ENCODE measurements at regions of chr5 and their contacts with region 1.

Region 1: DNA sequence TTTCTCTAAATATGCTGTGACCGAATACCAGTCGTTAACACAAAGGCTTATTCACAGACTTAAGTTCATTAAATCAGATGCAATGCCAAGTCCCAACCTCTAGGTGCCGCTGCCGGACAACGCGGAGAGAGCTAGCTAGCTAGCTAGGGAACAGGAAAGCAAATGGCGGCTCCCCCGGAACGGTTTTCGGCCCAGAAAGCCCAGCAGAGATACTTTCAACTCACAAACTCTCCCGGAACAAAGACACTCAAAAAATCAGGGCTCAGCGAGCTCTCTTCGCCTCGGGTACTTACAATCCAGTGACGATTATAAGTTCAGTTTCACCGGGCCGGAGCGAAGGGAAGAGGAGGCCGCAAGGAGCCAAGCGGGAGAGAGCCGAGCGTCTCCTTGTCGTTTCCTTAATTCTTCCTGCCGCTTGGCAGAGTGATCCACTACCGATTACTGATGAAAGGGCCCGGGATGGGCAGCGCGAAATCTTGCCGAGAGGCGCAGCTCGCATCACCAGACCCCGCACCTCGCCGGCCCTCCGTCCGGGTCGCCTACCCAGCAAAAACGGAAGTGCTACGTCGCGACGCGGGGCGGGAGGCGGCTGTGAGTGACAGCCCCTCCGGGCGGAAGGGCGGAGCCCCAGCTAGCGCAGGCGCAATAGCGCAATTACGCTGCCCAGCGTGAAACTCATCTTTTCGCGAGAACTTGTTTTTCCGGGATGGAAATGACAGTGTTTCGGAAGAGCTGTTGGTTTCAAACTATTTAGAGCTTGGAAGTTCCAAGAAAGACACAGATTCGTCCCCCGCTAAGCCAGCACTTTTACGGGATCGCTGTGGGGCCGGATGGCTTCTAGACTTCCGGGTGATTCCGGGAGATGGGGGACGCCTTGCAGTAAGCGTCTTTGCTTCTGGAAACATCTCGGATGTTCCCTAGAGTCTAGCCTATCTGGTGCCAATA is at the start of gene TAF7:
- DNase-seq: peak; percentile 96 to 98 (median 97)
- H3K4me3 ChIP-seq: peak within 1 kb of the TSS; percentile 62 to 97 (median 87)
- H3K27ac ChIP-seq: peak within 1 kb of the TSS; percentile 99
- H3K4me1 ChIP-seq: peaks cover 0 to 5% (median 0%) of the 10 kb centered on the region in 4 experiments
- H3K27me3 ChIP-seq: no peaks in the 10 kb centered on the region

Region 2: DNA sequence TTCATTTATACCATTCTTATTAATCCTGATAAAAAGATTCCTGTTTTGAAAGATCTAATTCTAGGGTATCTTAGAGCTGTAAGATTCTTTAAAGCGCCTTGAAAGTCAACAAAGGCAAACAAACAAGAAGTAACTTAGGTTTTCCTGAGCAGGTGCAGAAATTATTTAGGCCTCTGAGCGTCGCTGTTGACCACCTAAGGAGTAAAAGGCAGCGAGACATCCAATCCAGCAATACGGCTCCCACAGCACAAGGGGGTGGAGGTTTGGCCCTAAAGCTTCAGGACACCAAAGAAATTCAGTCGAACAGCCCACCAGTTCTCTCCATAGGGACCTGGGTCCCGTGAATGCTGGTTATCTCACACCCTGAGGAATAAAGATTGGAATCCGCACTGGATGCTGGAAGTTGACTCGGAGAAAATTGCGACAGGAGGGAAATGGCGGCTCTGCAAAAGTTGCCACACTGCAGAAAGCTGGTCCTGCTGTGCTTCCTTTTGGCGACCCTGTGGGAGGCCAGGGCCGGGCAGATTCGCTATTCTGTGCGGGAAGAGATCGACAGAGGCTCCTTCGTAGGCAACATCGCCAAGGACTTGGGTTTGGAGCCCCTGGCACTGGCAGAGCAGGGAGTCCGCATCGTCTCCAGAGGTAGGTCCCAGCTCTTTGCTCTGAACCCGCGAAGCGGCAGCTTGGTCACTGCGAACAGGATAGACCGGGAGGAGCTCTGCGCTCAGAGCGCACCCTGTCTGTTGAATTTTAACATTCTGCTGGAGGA is 18.2 kb after region 1 on chr5 and contains the start of gene PCDHGA2:
- CTCF ChIA-PET with region 1: interaction called, 12 read pairs
- POLR2A ChIA-PET with region 1: no interaction called
- DNase-seq: peak; percentile 47 to 79 (median 73)
- H3K4me3 ChIP-seq: peak within 1 kb of the TSS in 5 of 7 experiments; percentile 5 to 60 (median 33)
- H3K27ac ChIP-seq: no peak within 1 kb of the TSS
- H3K4me1 ChIP-seq: no peaks in the 10 kb centered on the region
- H3K27me3 ChIP-seq: peaks cover 17 to 76% (median 38%) of the 10 kb centered on the region in 5 experiments

Measured in common myeloid progenitor, CD34-positive (primary cell).